ENCODE measurements at regions of chr17 and their contacts with region 1.

Region 1: GRCh38 chr17:10646392-10646990 is 10.6 kb downstream of the MYH3 start:
- DNase-seq: no peak
- H3K4me3 ChIP-seq: no peak overlapping the region
- H3K27me3 ChIP-seq: no peaks in the 10 kb centered on the region
- CTCF ChIP-seq: peak; percentile 88

Region 2: DNA sequence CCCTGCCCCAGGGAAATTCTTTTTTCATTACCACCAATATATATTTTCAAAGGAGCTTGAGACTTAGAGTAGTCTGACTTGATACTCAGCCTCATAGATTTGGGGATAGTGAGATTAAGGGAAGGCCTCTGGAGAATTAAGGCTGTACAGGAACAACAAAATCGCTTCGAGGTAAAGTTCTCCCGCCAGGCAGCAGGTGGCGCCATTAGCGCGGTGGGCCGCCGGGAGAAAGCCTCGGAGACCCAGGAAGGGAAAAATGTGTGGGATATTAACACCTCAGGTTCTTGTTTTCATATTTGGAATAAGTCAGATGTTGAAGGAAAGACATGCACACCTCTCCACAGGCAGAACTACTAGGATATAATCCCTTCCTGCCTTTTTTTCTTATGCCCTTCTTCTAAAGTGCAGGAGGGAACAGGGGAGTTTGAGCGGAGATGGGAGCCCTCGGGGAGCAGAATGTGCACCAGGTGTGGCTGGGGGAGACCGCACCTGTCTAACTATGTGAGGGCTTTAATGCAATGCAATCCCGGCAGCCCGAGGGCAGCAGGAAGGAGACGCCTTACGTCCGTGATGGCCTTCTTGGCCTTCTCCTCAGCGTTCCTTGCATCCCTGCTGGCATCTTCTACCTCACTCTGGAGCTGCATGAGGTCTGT is 15.3 kb before region 1 on chr17:
- CTCF ChIA-PET with region 1: interaction called, 129 read pairs
- POLR2A ChIA-PET with region 1: no interaction called
- DNase-seq: no peak
- H3K4me3 ChIP-seq: no peak overlapping the region
- H3K27me3 ChIP-seq: no peaks in the 10 kb centered on the region
- CTCF ChIP-seq: peak; percentile 94

Region 3: GRCh38 chr17:10666906-10667305 is 20.4 kb after region 1 on chr17:
- CTCF ChIA-PET with region 1: interaction called, 19 read pairs
- POLR2A ChIA-PET with region 1: no interaction called
- DNase-seq: no peak
- H3K4me3 ChIP-seq: no peak overlapping the region
- H3K27me3 ChIP-seq: no peaks in the 10 kb centered on the region
- CTCF ChIP-seq: no peak

Region 4: DNA sequence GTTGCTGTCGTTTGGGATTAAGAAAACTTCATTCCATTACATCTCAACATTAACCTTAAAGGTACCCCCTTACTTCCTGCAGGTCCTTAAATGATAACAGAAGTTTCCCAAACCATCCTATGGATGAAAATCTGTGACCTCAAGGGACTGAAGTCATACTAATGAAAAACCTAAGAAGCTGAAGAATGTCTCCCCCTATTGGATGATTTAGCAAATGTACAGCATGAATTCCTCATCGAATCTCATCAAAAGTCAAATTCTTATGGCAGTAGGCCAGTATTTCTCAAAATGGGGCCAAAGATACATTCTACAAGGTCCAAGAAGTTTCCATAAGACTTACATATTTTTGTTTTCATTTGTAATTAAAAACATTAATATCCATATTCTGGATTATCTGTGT is 37.4 kb after region 1 on chr17:
- CTCF ChIA-PET with region 1: interaction called, 68 read pairs
- POLR2A ChIA-PET with region 1: no interaction called
- DNase-seq: no peak
- H3K4me3 ChIP-seq: no peak overlapping the region
- H3K27me3 ChIP-seq: no peaks in the 10 kb centered on the region
- CTCF ChIP-seq: peak; percentile 47

Region 5: DNA sequence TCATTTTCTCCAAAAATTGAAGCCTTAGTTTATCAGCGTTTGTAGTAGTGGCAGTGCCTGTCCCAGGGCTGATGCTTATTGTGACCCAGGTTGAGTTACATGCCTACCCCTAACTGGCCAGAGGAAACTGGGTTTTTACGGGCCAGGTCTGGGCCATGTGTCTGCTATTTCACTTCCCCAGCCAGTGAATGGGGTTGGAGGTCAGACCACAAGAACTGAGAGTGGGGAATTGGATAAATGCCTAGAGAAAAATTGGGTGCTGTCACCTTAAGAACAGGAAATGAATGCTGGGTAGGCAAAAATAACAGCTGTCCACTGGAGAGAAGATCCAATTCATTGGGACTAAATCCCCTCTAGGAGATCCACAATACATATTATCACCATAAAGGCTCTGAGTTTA is 56.1 kb after region 1 on chr17:
- CTCF ChIA-PET with region 1: interaction called, 14 read pairs
- POLR2A ChIA-PET with region 1: no interaction called
- DNase-seq: no peak
- H3K4me3 ChIP-seq: no peak overlapping the region
- H3K27me3 ChIP-seq: no peaks in the 10 kb centered on the region
- CTCF ChIP-seq: no peak

Region 6: DNA sequence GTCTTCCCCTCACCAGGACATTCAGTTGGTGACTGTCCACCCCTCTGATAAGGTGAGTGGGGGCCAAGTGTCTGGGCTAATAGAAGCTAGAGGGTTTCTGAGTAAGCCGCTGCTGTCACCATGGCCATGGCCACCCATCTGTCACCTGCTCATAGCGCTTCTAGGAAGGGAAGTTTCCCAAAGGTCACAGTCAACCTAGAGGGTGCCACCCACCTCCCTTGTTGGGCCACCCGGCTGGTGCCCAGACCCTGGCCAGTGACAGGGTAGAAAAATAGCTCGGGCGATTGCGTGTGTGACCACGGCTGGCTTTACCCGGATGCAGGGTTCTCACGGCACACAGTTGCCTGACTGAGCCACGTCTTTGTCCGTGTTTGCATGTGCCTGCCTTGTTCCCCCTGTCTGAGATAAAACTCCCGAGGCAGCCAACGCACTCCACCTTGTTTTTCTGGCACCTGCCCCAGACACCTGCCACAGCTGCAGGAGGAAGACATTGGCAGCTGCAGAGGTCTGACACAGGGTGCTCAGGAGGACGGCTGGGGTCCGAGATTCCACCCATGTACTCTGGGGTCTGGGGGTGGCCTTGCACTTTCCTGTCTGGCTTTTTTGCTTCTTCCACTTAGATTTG is 190.6 kb after region 1 on chr17:
- CTCF ChIA-PET with region 1: interaction called, 12 read pairs
- POLR2A ChIA-PET with region 1: no interaction called
- DNase-seq: no peak
- H3K4me3 ChIP-seq: no peak overlapping the region
- H3K27me3 ChIP-seq: no peaks in the 10 kb centered on the region
- CTCF ChIP-seq: no peak

Measured in BJ (cell line).